Cardiac septum (tissue), 1 donor: ENCODE measurements at regions of chr2 and their contacts with region 1.

Region 1: GRCh38 chr2:231900972-231901371 is 25.2 kb downstream of the NPPC start:
- DNase-seq: no peak

Region 2: DNA sequence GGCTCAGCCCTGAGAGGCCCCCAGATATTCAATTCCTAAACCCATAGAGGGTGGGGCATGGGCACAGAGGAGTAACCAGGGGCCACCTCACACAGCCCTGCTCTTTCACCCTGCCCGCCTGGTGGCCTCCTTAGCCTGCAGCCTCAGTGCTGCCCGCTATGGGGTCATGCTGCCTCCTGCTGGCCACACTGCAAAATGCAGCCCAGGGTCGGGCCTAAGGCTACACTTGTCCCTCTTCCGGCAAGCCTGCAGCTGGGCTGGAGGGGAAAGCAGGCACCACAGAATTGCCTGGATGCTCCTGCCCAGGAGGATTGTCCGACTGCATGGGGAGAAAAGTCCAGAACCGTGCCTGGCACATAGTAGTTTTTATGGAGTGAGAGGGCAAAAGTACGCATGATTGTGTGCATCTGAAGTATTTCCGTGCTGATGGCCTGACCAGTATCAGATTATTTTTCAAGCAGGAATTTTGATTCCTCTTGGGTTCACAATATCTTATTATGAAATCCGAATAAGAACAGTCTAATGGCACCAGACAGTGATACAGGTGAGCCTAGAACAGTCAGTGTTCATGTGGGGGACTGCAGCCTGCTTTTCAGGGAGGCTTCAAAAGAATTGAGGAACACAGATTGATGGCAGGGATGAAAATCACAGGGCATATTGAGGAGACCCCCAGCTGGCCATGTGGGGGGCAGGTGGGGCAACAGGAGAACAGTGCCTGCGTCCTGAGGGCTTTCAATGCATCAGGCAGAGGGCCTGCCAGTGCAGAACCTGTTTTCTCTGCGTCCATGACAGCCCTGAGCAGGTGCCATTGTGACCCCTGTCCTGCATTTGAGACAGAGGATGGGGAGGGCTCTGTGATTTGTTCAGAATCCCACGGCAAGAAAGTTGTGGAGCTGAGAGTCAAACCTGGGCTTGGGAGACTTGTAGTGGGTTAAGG is 426.4 kb after region 1 on chr2:
- intact Hi-C with region 1: loop called (anchors 1 kb)
- DNase-seq: peak; percentile 87